T-cell (primary cell): ENCODE measurements at regions of chr7 and their contacts with region 1.

Region 1: GRCh38 chr7:98771519-98771918 is 98.3 kb downstream of the TMEM130 start:
- DNase-seq: no peak
- ATAC-seq: no peak
- H3K4me3 ChIP-seq: no peak overlapping the region
- H3K4me3 Mint-ChIP-seq: no peak overlapping the region
- H3K27ac ChIP-seq: no peak overlapping the region
- H3K27ac Mint-ChIP-seq: no peak overlapping the region
- H3K4me1 ChIP-seq: no peaks in the 10 kb centered on the region
- H3K4me1 Mint-ChIP-seq: peaks cover 0 to 5% (median 0%) of the 10 kb centered on the region in 3 donors
- H3K27me3 ChIP-seq: peaks cover 0 to 25% of the 10 kb centered on the region in 2 experiments
- H3K27me3 Mint-ChIP-seq: peaks cover 4 to 17% of the 10 kb centered on the region in 2 donors

Region 2: GRCh38 chr7:98745722-98746318 is 25.7 kb before region 1 on chr7:
- CTCF ChIA-PET with region 1: no interaction called
- POLR2A ChIA-PET with region 1: no interaction called
- DNase-seq: peak; percentile 6 to 76 (median 57)
- ATAC-seq: peak in 2 of 4 experiments; percentile 54 to 60
- H3K4me3 ChIP-seq: no peak overlapping the region
- H3K4me3 Mint-ChIP-seq: no peak overlapping the region
- H3K27ac ChIP-seq: no peak overlapping the region
- H3K27ac Mint-ChIP-seq: no peak overlapping the region
- H3K4me1 ChIP-seq: no peaks in the 10 kb centered on the region
- H3K4me1 Mint-ChIP-seq: no peaks in the 10 kb centered on the region
- H3K27me3 ChIP-seq: peaks cover 0 to 19% of the 10 kb centered on the region in 2 experiments
- H3K27me3 Mint-ChIP-seq: peaks cover 13 to 20% of the 10 kb centered on the region in 2 donors

Region 3: GRCh38 chr7:98760201-98760651 is 11.3 kb before region 1 on chr7:
- CTCF ChIA-PET with region 1: no interaction called
- POLR2A ChIA-PET with region 1: interaction called in 1 of 2 experiments, 10 read pairs
- DNase-seq: no peak
- ATAC-seq: no peak
- H3K4me3 ChIP-seq: no peak overlapping the region
- H3K4me3 Mint-ChIP-seq: no peak overlapping the region
- H3K27ac ChIP-seq: no peak overlapping the region
- H3K27ac Mint-ChIP-seq: no peak overlapping the region
- H3K4me1 ChIP-seq: no peaks in the 10 kb centered on the region
- H3K4me1 Mint-ChIP-seq: no peaks in the 10 kb centered on the region
- H3K27me3 ChIP-seq: peaks cover 0 to 37% of the 10 kb centered on the region in 2 experiments
- H3K27me3 Mint-ChIP-seq: peaks cover 33 to 37% of the 10 kb centered on the region in 2 donors